ENCODE measurements at regions of chr17 and their contacts with region 1.

Region 1: DNA sequence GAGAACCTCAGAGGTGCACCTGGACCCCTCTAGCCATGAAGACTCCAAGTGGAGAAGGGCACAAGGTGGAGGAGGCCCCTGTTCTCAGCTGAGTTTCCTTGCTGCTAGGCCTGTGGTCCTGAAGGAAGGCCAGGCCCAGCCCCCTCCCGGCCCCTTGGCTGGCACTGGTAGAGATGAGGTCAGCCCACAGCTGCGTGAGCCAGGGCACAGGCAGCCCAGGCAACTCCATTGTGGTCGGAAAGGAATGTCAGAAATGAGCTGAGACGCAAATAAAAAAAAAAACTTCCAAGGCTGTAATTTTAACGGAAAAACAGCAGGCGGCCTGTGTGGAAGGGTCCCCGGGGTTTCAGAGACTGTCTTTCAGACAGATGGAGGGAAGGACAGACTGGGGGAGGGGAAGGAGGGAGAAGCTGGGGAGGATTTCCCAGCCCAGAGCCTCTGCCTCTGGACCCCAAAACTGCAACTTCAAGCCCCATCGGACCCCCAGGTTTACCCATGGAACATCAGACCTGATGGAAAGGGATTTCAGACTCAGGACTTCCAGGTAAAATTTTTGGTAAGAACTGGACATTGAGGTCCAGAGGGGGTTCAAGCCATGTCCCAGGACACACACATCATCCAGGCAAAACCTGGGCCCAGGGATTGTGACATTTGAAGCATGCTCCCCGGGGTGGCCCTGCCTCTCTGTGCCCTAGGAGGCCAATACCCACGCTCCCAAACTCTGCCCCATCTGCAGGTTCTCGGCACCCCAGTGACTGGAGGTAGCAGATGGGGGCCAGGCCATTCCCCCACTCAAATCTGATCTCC is 25.7 kb upstream of the MRPS23 start:
- DNase-seq: peak; percentile 91
- H3K4me3 ChIP-seq: no peak overlapping the region
- H3K27ac ChIP-seq: peak overlapping the region; percentile 61
- H3K4me1 ChIP-seq: peaks cover 70% of the 10 kb centered on the region
- H3K27me3 ChIP-seq: no peaks in the 10 kb centered on the region
- CTCF ChIP-seq: peak; percentile 57 to 58

Region 2: DNA sequence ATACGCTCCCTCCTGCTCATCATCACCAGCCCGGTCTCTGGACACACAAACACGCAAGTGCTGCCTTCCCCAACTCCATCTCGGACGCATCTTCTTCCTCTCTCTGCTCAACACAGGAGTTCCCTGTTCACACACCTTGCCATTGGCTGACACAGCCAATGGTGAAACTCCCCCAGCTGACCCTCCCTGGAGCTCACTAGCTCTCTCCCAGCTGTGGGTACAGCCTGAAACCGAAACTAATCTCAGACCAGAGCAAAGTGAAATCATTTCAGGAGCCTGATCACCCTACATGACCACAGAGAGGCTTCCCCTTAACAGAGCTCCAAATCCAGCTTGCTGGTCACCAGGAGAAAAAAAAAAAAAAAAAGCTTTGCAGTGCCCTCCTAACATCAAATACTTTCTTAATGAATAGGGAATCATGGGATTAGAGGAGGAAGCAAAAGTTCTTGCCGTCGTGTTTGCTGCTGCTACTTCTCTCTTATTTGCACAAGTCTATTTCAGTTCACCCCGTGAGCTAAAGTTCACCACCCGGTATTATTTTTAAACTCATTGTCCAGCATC is 71.4 kb after region 1 on chr17:
- CTCF ChIA-PET with region 1: no interaction called
- dilution Hi-C with region 1: no loop called
- in situ Hi-C with region 1: no loop called
- intact Hi-C with region 1: loop called (anchors 1 kb)
- DNase-seq: peak; percentile 69
- H3K4me3 ChIP-seq: no peak overlapping the region
- H3K27ac ChIP-seq: no peak overlapping the region
- H3K4me1 ChIP-seq: peaks cover 39% of the 10 kb centered on the region
- H3K27me3 ChIP-seq: no peaks in the 10 kb centered on the region
- CTCF ChIP-seq: no peak

Measured in mammary epithelial cell (primary cell).